ENCODE measurements at regions of chr4 and their contacts with region 1.

Region 1: DNA sequence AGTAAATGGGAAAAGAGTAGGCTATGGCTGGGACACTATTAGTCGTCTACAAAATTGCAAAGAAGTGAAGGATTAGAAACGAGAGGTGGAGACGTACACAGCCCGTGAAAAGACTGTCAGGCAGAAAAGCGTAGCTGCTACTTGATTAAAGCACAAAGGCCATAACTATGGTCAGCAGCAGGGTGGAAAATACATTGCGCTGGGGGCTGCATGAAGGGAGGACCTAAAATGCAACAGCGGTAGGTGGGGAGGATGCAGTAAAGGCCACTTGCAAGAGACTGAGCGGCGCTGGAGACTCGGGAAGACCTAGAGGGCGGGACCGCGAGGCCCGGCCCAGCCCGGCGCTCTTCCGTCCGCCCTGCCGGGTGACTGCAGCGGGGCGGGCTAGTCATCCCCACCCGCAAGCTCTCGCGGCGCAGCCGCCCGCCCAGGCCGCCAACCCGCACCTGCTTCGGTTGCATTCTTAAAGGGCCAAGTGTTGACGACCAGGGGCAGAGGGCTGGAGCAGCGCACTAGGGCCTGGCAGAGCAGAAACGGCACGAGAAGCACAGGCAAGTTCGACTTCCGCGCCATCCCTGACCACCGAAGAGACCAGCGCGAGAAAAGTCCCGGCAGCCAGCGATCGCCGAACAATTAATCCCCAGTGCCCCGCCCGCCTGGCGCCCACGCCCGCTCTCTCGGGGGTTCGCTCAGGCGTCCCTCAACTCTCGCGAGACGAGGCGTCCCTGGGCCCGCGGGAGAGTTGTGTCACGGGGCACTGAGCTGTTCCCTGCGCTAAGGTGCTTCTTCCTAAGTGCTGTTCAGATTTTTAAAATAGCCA is at the start of gene AGA:
- DNase-seq: peak; percentile 97
- ATAC-seq: peak; percentile 93
- H3K4me3 Mint-ChIP-seq: peak within 1 kb of the TSS; percentile 85
- H3K27ac Mint-ChIP-seq: peak within 1 kb of the TSS; percentile 94
- H3K4me1 Mint-ChIP-seq: peaks cover 21% of the 10 kb centered on the region
- H3K27me3 Mint-ChIP-seq: no peaks in the 10 kb centered on the region
- total RNA-seq, gene AGA: 26.8 to 27.4 TPM

Region 2: GRCh38 chr4:177250056-177250696 is 191.8 kb before region 1 on chr4:
- CTCF ChIA-PET with region 1: interaction called, 12 read pairs
- POLR2A ChIA-PET with region 1: interaction called, 6 read pairs
- DNase-seq: peak; percentile 77
- ATAC-seq: peak; percentile 97
- H3K4me3 Mint-ChIP-seq: no peak overlapping the region
- H3K27ac Mint-ChIP-seq: no peak overlapping the region
- H3K4me1 Mint-ChIP-seq: peaks cover 10% of the 10 kb centered on the region
- H3K27me3 Mint-ChIP-seq: peaks cover 12% of the 10 kb centered on the region

Region 3: GRCh38 chr4:177309522-177310371 is 132.3 kb before region 1 on chr4 and contains the start of gene NEIL3:
- CTCF ChIA-PET with region 1: interaction called, 11 read pairs
- POLR2A ChIA-PET with region 1: interaction called, 40 read pairs
- DNase-seq: peak; percentile 98
- ATAC-seq: peak; percentile 92
- H3K4me3 Mint-ChIP-seq: peak within 1 kb of the TSS; percentile 95
- H3K27ac Mint-ChIP-seq: peak within 1 kb of the TSS; percentile 97
- H3K4me1 Mint-ChIP-seq: peaks cover 48% of the 10 kb centered on the region
- H3K27me3 Mint-ChIP-seq: no peaks in the 10 kb centered on the region
- total RNA-seq, gene NEIL3: 33.7 to 35.2 TPM

Region 4: GRCh38 chr4:177393236-177393635 is 48.8 kb before region 1 on chr4:
- CTCF ChIA-PET with region 1: interaction called, 8 read pairs
- POLR2A ChIA-PET with region 1: interaction called, 15 read pairs
- DNase-seq: peak; percentile 82
- ATAC-seq: peak; percentile 95
- H3K4me3 Mint-ChIP-seq: peak overlapping the region; percentile 27
- H3K27ac Mint-ChIP-seq: peak overlapping the region; percentile 64
- H3K4me1 Mint-ChIP-seq: peaks cover 40% of the 10 kb centered on the region
- H3K27me3 Mint-ChIP-seq: peaks cover 4% of the 10 kb centered on the region

Region 5: DNA sequence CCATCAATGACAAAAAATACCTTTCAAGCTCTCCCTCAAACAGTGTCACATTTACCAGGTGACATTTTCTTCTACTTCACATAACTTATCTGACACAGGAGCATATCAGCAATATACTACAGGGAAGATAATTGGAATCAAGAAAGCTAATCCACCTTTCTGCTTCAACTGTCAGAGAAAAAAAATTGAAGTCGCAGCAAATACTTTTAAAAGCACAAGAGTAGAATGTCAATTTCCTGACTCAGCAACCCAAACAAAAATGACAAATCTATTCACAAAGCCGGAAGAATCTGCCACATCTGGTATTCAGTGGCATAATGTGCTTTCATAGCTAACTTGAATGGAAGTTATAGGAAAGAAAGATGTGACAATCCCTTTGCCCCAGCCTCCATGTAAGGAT is 36.5 kb before region 1 on chr4:
- CTCF ChIA-PET with region 1: no interaction called
- POLR2A ChIA-PET with region 1: interaction called, 14 read pairs
- DNase-seq: no peak
- ATAC-seq: no peak
- H3K4me3 Mint-ChIP-seq: no peak overlapping the region
- H3K27ac Mint-ChIP-seq: no peak overlapping the region
- H3K4me1 Mint-ChIP-seq: peaks cover 35% of the 10 kb centered on the region
- H3K27me3 Mint-ChIP-seq: peaks cover 6% of the 10 kb centered on the region

Region 6: GRCh38 chr4:177706916-177707315 is 264.9 kb after region 1 on chr4:
- CTCF ChIA-PET with region 1: no interaction called
- POLR2A ChIA-PET with region 1: no interaction called
- DNase-seq: no peak
- ATAC-seq: no peak
- H3K4me3 Mint-ChIP-seq: no peak overlapping the region
- H3K27ac Mint-ChIP-seq: no peak overlapping the region
- H3K4me1 Mint-ChIP-seq: no peaks in the 10 kb centered on the region
- H3K27me3 Mint-ChIP-seq: no peaks in the 10 kb centered on the region